ENCODE measurements at regions of chr3 and their contacts with region 1.

Region 1: DNA sequence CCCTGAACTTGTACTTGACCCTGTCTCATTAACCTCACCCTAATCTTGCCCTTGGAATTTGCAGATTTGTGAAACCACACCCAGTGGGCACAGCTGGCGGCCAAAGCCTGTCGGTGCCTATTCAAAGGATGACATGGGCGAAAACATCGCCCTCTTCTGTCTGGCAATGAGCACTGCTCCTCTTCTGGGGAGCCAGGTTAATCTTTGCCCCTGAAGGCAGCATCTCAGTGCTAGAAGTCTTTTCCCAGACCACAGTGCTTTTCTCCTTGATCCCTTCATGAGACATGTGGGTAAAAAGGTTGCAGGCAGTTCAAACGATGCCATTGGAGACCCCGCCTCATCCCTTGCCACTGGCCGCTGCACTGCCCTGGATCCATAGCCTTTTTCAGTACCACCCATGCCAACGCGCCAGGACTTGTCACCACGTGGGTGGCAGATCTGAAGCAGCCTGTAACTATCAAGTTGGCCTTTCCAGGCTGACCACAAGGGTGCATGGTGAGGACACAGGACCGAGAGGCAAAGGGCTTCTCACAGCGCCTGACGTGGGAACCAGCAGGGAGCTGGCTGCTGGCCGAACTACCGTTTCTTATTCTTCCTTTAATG is 6.5 kb upstream of the DNASE1L3 start:
- DNase-seq: peak; percentile 60 to 67
- ATAC-seq: peak; percentile 70 to 82 (median 72)
- H3K4me3 ChIP-seq: no peak overlapping the region
- H3K27ac ChIP-seq: no peak overlapping the region
- H3K4me1 ChIP-seq: no peaks in the 10 kb centered on the region
- H3K27me3 ChIP-seq: no peaks in the 10 kb centered on the region
- CTCF ChIP-seq: peak; percentile 59

Region 2: DNA sequence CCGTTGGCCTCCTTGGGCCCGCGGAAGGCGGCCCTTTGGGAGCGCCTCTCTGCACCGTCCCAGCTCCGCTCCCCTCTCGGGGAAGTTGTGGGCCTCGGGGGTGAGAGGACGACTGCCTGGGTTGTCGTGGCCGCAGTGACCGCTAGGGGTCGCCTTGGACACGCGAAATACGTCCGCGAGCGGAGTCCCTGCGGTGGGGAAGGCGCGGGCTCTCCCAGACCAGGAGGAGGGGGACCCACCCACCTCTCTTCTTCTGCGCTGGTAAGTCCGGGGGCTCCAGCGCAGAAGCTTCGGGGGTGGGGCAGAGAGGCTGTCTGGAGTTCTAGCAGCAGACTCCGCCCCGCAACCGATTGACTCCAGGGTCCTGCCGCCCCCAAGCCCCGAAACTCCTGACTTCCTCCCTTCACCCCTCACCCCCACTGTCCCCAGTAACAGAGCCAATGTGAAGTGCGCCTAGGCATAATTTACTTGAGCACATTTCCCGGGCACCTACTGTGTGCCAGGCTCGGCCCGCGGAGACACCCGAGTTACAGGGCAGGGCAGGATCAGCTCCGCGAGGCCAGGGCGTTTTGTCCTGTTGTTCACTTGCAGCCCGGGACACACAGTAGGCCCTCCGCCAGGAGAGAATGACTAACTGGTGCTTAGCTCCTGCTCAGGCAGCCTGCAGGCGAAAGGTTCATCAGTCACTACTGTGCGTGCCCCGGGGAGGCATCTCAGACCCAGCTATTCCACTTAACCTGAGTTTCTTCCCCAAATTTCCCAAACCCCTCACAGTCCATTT is 39.4 kb before region 1 on chr3:
- intact Hi-C with region 1: loop called (anchors 5 kb)
- DNase-seq: peak; percentile 90 to 95
- ATAC-seq: peak; percentile 93 to 99 (median 94)
- H3K4me3 ChIP-seq: peak overlapping the region; percentile 61
- H3K27ac ChIP-seq: no peak overlapping the region
- H3K4me1 ChIP-seq: peaks cover 3% of the 10 kb centered on the region
- H3K27me3 ChIP-seq: no peaks in the 10 kb centered on the region
- CTCF ChIP-seq: peak; percentile 94

Measured in psoas muscle (tissue), 8 donors.